ENCODE measurements at regions of chr7 and their contacts with region 1.

Region 1: GRCh38 chr7:87424075-87424474 is 51.4 kb downstream of the ABCB4 start:
- DNase-seq: no peak
- ATAC-seq: no peak
- H3K4me3 ChIP-seq: no peak overlapping the region
- H3K4me3 Mint-ChIP-seq: no peak overlapping the region
- H3K27ac ChIP-seq: no peak overlapping the region
- H3K27ac Mint-ChIP-seq: no peak overlapping the region
- H3K4me1 ChIP-seq: no peaks in the 10 kb centered on the region
- H3K4me1 Mint-ChIP-seq: no peaks in the 10 kb centered on the region
- H3K27me3 ChIP-seq: no peaks in the 10 kb centered on the region
- H3K27me3 Mint-ChIP-seq: peaks cover 10% of the 10 kb centered on the region
- CTCF ChIP-seq: no peak

Region 2: DNA sequence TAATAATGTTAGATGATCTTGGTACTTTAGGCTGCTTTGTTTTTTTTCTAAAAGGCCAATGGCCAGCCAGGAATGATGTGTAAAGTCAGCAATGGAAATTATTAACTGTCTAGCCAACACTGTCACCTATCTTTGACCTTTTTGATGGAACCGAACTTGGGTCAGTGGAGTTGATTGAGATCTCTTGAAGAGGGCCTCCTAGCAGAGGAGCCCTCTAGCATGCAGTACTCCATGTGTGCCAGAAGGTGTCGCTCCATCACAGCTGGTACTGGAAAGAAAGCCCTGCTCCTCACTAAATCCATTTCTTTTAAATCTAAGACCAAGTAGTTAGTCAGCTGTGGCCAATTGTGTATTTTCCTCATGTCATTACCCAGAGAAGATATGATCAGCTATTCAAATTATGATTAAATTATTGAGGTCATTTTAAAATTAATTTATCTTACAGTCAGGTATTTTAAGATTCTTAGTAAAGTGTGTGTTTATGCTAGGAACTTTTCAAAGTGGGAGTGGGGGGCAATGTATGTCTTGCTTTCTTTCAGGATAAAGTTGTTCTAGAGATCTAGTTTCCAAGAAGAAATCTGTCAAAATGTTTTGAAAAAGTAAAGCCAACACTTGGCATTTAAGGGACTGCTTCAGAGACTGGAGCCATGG is 111.7 kb before region 1 on chr7:
- CTCF ChIA-PET with region 1: interaction called, 386 read pairs
- POLR2A ChIA-PET with region 1: no interaction called
- intact Hi-C with region 1: no loop called
- DNase-seq: peak; percentile 19 to 76 (median 66)
- ATAC-seq: peak; percentile 98
- H3K4me3 ChIP-seq: no peak overlapping the region
- H3K4me3 Mint-ChIP-seq: no peak overlapping the region
- H3K27ac ChIP-seq: no peak overlapping the region
- H3K27ac Mint-ChIP-seq: no peak overlapping the region
- H3K4me1 ChIP-seq: no peaks in the 10 kb centered on the region
- H3K4me1 Mint-ChIP-seq: peaks cover 7% of the 10 kb centered on the region
- H3K27me3 ChIP-seq: no peaks in the 10 kb centered on the region
- H3K27me3 Mint-ChIP-seq: peaks cover 2% of the 10 kb centered on the region
- CTCF ChIP-seq: peak; percentile 97

Measured in CD8-positive, alpha-beta T cell (primary cell).